Activated naive CD4-positive, alpha-beta T cell treated with anti-CD3 and anti-CD28 coated beads for 36 hours (primary cell): ENCODE measurements at regions of chr2 and their contacts with region 1.

Region 1: GRCh38 chr2:222860740-222861410 is at the start of gene ACSL3:
- DNase-seq: peak; percentile 95
- H3K4me3 Mint-ChIP-seq: peak within 1 kb of the TSS; percentile 75
- H3K27ac Mint-ChIP-seq: peak within 1 kb of the TSS; percentile 76
- H3K4me1 Mint-ChIP-seq: peaks cover 6% of the 10 kb centered on the region
- H3K27me3 Mint-ChIP-seq: no peaks in the 10 kb centered on the region
- total RNA-seq, gene ACSL3: 35.1 to 36.1 TPM

Region 2: DNA sequence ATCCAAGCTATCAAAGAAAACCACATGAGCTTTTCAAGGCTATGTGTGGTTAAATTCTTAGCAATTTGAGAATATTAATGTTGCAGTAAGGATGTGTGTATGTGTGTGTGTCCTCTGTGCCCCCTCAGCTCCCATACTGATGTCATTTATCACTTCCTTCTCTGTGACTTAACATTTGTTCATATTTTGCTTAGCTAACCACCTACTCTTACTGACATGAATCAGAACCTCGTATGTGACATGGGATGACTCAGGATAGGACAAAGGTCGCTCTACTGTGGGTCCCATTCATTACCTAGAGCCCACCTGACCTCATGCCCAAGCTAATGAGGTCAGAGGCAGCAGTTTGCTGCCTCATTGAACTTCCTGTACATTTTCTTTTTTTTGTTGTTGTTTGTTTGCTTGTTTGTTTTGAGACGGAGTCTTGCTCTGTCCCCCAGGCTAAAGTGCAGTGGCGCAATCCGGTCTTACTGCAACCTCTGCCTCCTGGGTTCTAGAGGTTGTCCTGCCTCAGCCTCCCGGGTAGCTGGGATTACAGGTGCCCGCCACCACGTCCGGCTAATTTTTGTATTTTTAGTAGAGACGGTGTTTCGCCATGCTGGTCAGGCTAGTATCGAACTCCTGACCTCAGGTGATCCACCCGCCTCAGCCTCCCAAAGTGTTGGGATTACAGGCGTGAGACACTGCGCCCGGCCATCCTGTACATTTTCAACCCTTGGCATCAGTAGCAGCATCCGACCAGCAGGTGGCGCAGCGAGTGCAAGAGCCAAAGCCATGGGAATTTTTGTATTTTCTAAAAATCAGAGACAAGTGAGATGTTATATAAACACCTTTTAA is 153.0 kb before region 1 on chr2:
- CTCF ChIA-PET with region 1: interaction called, 5 read pairs
- intact Hi-C with region 1: loop called (anchors 1 kb)
- DNase-seq: peak; percentile 88
- H3K4me3 Mint-ChIP-seq: no peak overlapping the region
- H3K27ac Mint-ChIP-seq: no peak overlapping the region
- H3K4me1 Mint-ChIP-seq: peaks cover 6% of the 10 kb centered on the region
- H3K27me3 Mint-ChIP-seq: peaks cover 22% of the 10 kb centered on the region

Region 3: GRCh38 chr2:222813177-222813843 is 47.6 kb before region 1 on chr2:
- CTCF ChIA-PET with region 1: interaction called, 3 read pairs
- intact Hi-C with region 1: loop called (anchors 1 kb)
- DNase-seq: peak; percentile 39
- H3K4me3 Mint-ChIP-seq: no peak overlapping the region
- H3K27ac Mint-ChIP-seq: peak overlapping the region; percentile 57
- H3K4me1 Mint-ChIP-seq: peaks cover 17% of the 10 kb centered on the region
- H3K27me3 Mint-ChIP-seq: peaks cover 8% of the 10 kb centered on the region

Region 4: DNA sequence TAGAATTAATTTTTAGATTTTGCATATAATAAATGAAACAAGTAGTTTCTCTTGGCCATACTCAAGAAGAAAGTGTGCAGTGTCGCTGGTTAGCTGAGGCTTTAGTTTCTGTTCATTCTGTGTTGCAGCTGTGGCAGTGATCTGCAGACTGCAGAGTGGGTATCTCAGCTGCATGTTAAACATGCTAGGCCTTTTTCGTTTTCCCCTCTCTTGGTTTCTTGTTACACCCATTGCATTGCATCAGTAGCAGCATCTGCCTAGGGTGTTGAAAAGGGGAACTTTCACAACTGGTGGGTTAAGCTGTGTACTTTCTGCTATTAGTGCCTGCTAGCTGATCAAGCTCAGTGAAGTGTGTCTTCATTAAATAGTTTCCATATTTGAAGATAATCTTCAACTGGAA is 51.2 kb after region 1 on chr2:
- CTCF ChIA-PET with region 1: no interaction called
- intact Hi-C with region 1: loop called (anchors 2 kb)
- DNase-seq: peak; percentile 28
- H3K4me3 Mint-ChIP-seq: no peak overlapping the region
- H3K27ac Mint-ChIP-seq: no peak overlapping the region
- H3K4me1 Mint-ChIP-seq: peaks cover 40% of the 10 kb centered on the region
- H3K27me3 Mint-ChIP-seq: no peaks in the 10 kb centered on the region